A549 (cell line): ENCODE measurements at regions of chr18 and their contacts with region 1.

Region 1: GRCh38 chr18:11733031-11733430 is 44.0 kb downstream of the GNAL start:
- DNase-seq: peak; percentile 52 to 74
- ATAC-seq: peak; percentile 96 to 98
- H3K4me3 ChIP-seq: no peak overlapping the region
- H3K27ac ChIP-seq: peak overlapping the region; percentile 60 to 70; a peak in 4 of 6 replicates
- H3K4me1 ChIP-seq: 0 out of 3 replicates have a peak, but pooled peaks cover 3% of the 10 kb centered on the region
- CTCF ChIP-seq: peak; percentile 79
- EP300 ChIP-seq: no peak
- POLR2A ChIP-seq: no peak
- RAD21 ChIP-seq: peak; percentile 79 to 84

Region 2: GRCh38 chr18:11548916-11549551 is 184.0 kb before region 1 on chr18:
- CTCF ChIA-PET with region 1: no interaction called
- POLR2A ChIA-PET with region 1: no interaction called
- DNase-seq: no peak
- ATAC-seq: no peak
- H3K4me3 ChIP-seq: no peak overlapping the region
- H3K27ac ChIP-seq: no peak overlapping the region
- H3K4me1 ChIP-seq: no peaks in the 10 kb centered on the region
- CTCF ChIP-seq: no peak
- EP300 ChIP-seq: no peak
- POLR2A ChIP-seq: no peak
- RAD21 ChIP-seq: no peak

Region 3: GRCh38 chr18:11654736-11655605 is 78.1 kb before region 1 on chr18:
- CTCF ChIA-PET with region 1: interaction called, 64 read pairs
- POLR2A ChIA-PET with region 1: no interaction called
- DNase-seq: peak; percentile 37 to 65
- ATAC-seq: peak; percentile 88 to 93
- H3K4me3 ChIP-seq: 0 out of 3 replicates have a peak overlapping the region, but pooled peaks have one; percentile 29
- H3K27ac ChIP-seq: 0 out of 6 replicates have a peak overlapping the region, but pooled peaks of 1 of the 2 experiments have one; percentile 18
- H3K4me1 ChIP-seq: no peaks in the 10 kb centered on the region
- CTCF ChIP-seq: peak; percentile 78
- EP300 ChIP-seq: no peak
- POLR2A ChIP-seq: no peak
- RAD21 ChIP-seq: peak; percentile 76 to 84

Region 4: DNA sequence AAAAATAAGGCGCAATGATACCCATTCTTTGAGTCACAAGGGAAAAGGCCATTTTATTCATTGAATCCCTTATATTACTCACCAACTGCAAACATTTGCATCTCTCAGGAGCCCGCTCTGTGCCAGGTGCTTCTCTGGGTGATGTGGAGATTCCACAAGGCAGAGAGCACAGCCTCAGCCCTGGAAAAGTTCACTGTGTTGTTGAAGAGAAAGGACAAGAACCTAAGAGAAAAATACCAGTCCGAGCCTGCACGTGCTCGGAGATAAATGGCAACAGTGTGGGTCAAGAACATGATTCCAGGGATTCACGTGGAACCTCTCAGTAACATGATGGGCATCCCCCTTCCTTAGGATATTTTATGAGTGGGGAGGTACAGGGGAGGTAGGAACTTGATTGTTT is 32.2 kb before region 1 on chr18:
- CTCF ChIA-PET with region 1: interaction called, 10 read pairs
- POLR2A ChIA-PET with region 1: no interaction called
- DNase-seq: no peak
- ATAC-seq: no peak
- H3K4me3 ChIP-seq: no peak overlapping the region
- H3K27ac ChIP-seq: no peak overlapping the region
- H3K4me1 ChIP-seq: no peaks in the 10 kb centered on the region
- CTCF ChIP-seq: no peak
- EP300 ChIP-seq: no peak
- POLR2A ChIP-seq: no peak
- RAD21 ChIP-seq: no peak

Region 5: DNA sequence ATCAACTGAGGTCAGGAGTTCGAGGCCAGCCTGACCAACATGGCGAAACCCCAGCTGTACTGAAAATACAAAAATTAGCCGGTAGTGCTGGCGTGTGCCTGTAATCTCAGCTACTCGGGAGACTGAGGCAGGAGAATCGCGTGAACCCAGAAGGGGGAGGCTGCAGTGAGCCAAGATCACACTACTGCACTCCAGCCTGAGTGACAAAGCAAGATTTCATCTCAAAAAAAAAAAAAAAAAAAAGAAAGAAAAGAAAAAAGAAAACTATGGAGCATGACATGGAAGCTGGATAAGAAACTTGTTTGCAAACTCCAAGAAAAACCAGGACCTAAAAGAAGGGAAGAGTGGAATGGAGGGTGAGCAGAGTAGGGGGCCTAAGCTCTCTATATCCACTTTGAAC is 116.2 kb after region 1 on chr18:
- CTCF ChIA-PET with region 1: interaction called, 15 read pairs
- POLR2A ChIA-PET with region 1: no interaction called
- DNase-seq: no peak
- ATAC-seq: no peak
- H3K4me3 ChIP-seq: 0 out of 3 replicates have a peak overlapping the region, but pooled peaks have one; percentile 78
- H3K27ac ChIP-seq: peak overlapping the region; percentile 91 to 99
- H3K4me1 ChIP-seq: peaks cover 40% of the 10 kb centered on the region
- CTCF ChIP-seq: no peak
- EP300 ChIP-seq: no peak
- POLR2A ChIP-seq: no peak
- RAD21 ChIP-seq: no peak

Region 6: GRCh38 chr18:11859903-11860407 is 126.9 kb after region 1 on chr18:
- CTCF ChIA-PET with region 1: interaction called, 10 read pairs
- POLR2A ChIA-PET with region 1: no interaction called
- DNase-seq: peak; percentile 67 to 92
- ATAC-seq: peak; percentile 36 to 55; a peak in 5 of 6 replicates
- H3K4me3 ChIP-seq: peak overlapping the region; percentile 54
- H3K27ac ChIP-seq: peak overlapping the region; percentile 98 to 99
- H3K4me1 ChIP-seq: peaks cover 45% of the 10 kb centered on the region
- CTCF ChIP-seq: peak; percentile 27; the same call in 2 of the 3 replicates
- EP300 ChIP-seq: peak; percentile 56 to 84; a peak in 3 of 5 replicates
- POLR2A ChIP-seq: no peak
- RAD21 ChIP-seq: peak; percentile 25 to 32; a peak in 3 of 5 replicates

Region 7: DNA sequence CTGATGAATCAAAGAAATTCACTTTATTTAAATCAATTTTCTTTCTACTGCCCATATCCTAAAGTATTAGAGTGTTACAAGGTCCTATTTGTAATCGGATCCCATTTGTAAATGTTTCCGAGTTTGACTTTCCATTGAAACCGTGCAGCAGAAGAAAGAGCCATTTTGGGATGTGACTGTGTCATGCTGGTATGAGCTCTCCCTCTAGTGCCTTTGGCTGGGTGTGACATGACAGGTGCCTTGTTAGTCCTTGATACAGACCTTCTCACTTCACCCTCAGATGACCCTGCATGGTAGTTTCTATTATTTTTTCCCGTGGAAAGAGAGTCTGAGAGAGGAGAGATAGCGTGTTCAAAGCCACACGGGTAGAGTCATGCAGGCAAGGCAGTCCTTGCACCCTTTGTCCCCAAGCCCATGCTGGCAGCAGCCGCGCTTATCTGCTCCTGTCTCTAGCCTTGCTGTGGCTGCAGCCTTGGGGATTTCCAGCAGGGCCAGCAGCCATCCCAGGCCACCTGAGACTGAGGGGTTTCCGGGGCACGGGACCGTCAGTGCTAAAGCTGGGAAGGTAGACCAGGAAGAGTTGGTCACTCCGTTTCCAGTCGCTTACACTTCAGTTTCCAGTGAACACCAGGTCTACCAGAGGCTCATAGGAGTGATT is 139.6 kb after region 1 on chr18:
- CTCF ChIA-PET with region 1: interaction called, 25 read pairs
- POLR2A ChIA-PET with region 1: no interaction called
- DNase-seq: peak; percentile 41 to 67
- ATAC-seq: peak; percentile 81 to 85; a peak in 5 of 6 replicates
- H3K4me3 ChIP-seq: no peak overlapping the region
- H3K27ac ChIP-seq: no peak overlapping the region; a peak in 1 of 6 replicates
- H3K4me1 ChIP-seq: no peaks in the 10 kb centered on the region
- CTCF ChIP-seq: peak; percentile 49
- EP300 ChIP-seq: no peak
- POLR2A ChIP-seq: no peak
- RAD21 ChIP-seq: peak; percentile 67 to 68

Region 8: DNA sequence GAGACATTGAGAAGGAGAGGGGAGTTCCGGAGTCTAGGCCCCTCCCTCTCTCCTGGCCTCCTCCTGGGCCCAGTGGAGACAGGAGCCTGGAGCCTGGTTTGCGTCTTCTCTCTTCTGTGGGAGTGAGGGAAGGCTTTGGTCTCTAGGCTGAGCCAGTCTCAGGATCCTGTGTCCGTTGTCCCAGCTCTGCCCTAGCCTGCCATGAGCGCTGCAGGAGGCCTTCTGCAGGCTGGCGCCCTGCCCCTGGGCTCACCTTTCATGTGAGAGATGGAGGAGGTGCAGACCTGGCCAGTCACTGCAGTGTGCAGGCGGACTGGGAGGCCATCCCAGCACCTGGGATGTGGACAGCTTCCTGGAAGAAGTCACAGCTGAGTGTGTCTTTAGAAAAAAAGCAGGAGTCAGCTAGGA is 256.9 kb after region 1 on chr18:
- CTCF ChIA-PET with region 1: interaction called, 76 read pairs
- POLR2A ChIA-PET with region 1: no interaction called
- DNase-seq: no peak
- ATAC-seq: no peak
- H3K4me3 ChIP-seq: no peak overlapping the region
- H3K27ac ChIP-seq: peak overlapping the region in 1 of 2 experiments; percentile 66; a peak in 3 of 6 replicates
- H3K4me1 ChIP-seq: peaks cover 68% of the 10 kb centered on the region
- CTCF ChIP-seq: no peak
- EP300 ChIP-seq: no peak
- POLR2A ChIP-seq: no peak
- RAD21 ChIP-seq: no peak